Panc1 (cell line): ENCODE measurements at regions of chr13 and their contacts with region 1.

Region 1: DNA sequence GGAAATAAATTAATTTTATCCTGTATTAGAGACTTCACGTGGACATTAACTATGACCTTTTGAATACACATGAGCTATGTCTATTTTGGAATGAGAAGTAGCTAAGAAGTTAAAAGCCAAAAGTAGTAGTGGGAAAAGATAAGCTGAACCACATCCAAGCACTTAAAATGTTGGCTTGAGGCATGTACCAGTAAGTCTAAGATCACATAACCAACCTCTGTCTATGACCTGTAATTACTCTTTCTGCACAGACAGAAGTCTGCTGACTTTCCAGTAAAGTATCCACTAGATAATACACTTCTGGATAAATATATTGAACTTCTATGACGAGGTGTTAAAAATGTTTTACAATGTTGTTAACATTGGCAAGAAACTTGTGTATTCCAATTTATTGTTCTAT is 68.7 kb downstream of the LIG4 start:
- DNase-seq: no peak
- ATAC-seq: no peak
- H3K4me3 ChIP-seq: no peak overlapping the region
- H3K27ac ChIP-seq: no peak overlapping the region
- H3K4me1 ChIP-seq: no peaks in the 10 kb centered on the region
- H3K27me3 ChIP-seq: no peaks in the 10 kb centered on the region
- CTCF ChIP-seq: no peak

Region 2: DNA sequence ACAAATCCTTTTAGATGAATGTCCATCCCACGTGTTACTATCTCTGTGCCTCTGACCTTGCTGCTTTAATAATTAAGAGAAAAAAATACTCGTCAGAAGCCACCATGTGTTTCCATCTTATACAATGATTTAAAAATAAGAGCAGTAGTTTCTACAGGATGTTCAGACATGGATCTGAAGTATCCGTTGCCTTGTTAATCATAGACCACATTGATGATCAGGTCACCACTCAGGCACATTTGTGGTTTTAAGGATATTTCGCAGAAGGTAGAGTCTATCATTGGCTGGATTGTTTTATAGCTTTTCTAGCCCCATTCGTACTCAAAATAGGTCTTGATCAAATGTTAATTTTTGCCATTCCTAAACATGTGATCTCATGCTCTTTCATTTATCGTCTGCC is 868.7 kb before region 1 on chr13:
- CTCF ChIA-PET with region 1: no interaction called
- POLR2A ChIA-PET with region 1: interaction called, 10 read pairs
- in situ Hi-C with region 1: no loop called
- intact Hi-C with region 1: no loop called
- DNase-seq: no peak
- ATAC-seq: no peak
- H3K4me3 ChIP-seq: no peak overlapping the region
- H3K27ac ChIP-seq: no peak overlapping the region
- H3K4me1 ChIP-seq: no peaks in the 10 kb centered on the region
- H3K27me3 ChIP-seq: no peaks in the 10 kb centered on the region
- CTCF ChIP-seq: no peak

Region 3: GRCh38 chr13:109043636-109044035 is 897.0 kb after region 1 on chr13:
- CTCF ChIA-PET with region 1: no interaction called
- POLR2A ChIA-PET with region 1: no interaction called
- in situ Hi-C with region 1: no loop called
- intact Hi-C with region 1: no loop called
- DNase-seq: no peak
- ATAC-seq: no peak
- H3K4me3 ChIP-seq: no peak overlapping the region
- H3K27ac ChIP-seq: no peak overlapping the region
- H3K4me1 ChIP-seq: no peaks in the 10 kb centered on the region
- H3K27me3 ChIP-seq: no peaks in the 10 kb centered on the region
- CTCF ChIP-seq: no peak